CD4-positive, alpha-beta memory T cell (primary cell): ENCODE measurements at regions of chr10 and their contacts with region 1.

Region 1: DNA sequence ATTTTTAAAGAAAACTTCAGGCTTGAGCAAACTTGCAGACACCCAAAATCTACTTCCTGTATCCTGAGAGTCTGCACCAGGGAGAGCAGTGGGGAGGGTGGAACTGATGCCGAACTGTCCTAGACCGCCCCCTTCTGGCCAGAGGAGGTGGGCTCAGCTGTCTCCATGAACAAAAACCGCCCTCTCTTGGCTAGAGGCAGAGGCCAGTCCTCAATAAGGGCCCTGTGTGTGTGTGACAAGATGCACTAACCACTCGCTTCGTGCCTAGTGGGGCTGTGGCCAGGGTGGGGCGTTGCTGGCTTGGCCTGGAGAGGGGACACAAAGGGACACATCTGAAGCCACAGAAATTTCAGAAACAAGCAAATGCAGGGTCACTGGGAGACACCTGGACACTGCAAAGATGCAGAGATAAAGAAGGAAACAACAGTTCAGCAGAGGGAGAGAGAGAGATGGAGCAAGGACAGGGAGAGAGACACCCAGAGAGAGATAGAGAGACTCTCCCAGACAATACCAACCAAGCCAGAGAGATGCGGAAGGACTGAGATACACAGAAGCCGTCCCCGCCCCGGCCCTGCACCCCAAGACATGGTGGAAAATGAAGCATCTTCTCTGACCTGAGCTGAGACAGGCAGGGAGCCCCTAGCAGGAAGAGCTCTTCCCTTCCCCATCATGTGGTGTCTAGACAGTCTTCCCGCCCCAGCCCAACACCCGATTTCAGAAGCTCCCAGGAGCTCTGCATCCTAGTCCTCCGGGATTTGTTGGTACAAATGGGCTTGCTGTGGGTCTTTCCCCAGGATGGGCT is 22.7 kb upstream of the FXYD4 start:
- DNase-seq: peak; percentile 85 to 87 (median 86)
- H3K4me3 ChIP-seq: no peak overlapping the region
- H3K4me3 Mint-ChIP-seq: peak overlapping the region in 3 of 8 donors; percentile 27 to 50 (median 31)
- H3K27ac ChIP-seq: no peak overlapping the region
- H3K27ac Mint-ChIP-seq: peak overlapping the region in 6 of 7 donors; percentile 36 to 83 (median 57)
- H3K4me1 ChIP-seq: peaks cover 20% of the 10 kb centered on the region
- H3K4me1 Mint-ChIP-seq: peaks cover 16 to 30% (median 23%) of the 10 kb centered on the region in 4 donors
- H3K27me3 ChIP-seq: no peaks in the 10 kb centered on the region
- H3K27me3 Mint-ChIP-seq: peaks cover 6 to 7% of the 10 kb centered on the region in 2 donors

Region 2: GRCh38 chr10:42753126-42753506 is 595.6 kb before region 1 on chr10:
- CTCF ChIA-PET with region 1: no interaction called
- POLR2A ChIA-PET with region 1: no interaction called
- intact Hi-C with region 1: loop called (anchors 2 kb)
- DNase-seq: peak; percentile 50 to 65 (median 60)
- H3K4me3 ChIP-seq: peak overlapping the region; percentile 36 to 38
- H3K4me3 Mint-ChIP-seq: peak overlapping the region; percentile 81 to 92 (median 84)
- H3K27ac ChIP-seq: no peak overlapping the region
- H3K27ac Mint-ChIP-seq: no peak overlapping the region
- H3K4me1 ChIP-seq: peaks cover 13% of the 10 kb centered on the region
- H3K4me1 Mint-ChIP-seq: peaks cover 0 to 17% (median 4%) of the 10 kb centered on the region in 4 donors
- H3K27me3 ChIP-seq: peaks cover 12% of the 10 kb centered on the region
- H3K27me3 Mint-ChIP-seq: peaks cover 45 to 48% of the 10 kb centered on the region in 2 donors

Region 3: GRCh38 chr10:43255634-43256431 is 92.9 kb before region 1 on chr10:
- CTCF ChIA-PET with region 1: interaction called, 13 read pairs
- POLR2A ChIA-PET with region 1: no interaction called
- intact Hi-C with region 1: no loop called
- DNase-seq: peak; percentile 26 to 44 (median 34)
- H3K4me3 ChIP-seq: no peak overlapping the region
- H3K4me3 Mint-ChIP-seq: no peak overlapping the region
- H3K27ac ChIP-seq: no peak overlapping the region
- H3K27ac Mint-ChIP-seq: peak overlapping the region in 4 of 7 donors; percentile 33 to 75 (median 47)
- H3K4me1 ChIP-seq: peaks cover 12% of the 10 kb centered on the region
- H3K4me1 Mint-ChIP-seq: peaks cover 6 to 36% (median 15%) of the 10 kb centered on the region in 4 donors
- H3K27me3 ChIP-seq: no peaks in the 10 kb centered on the region
- H3K27me3 Mint-ChIP-seq: no peaks in the 10 kb centered on the region

Region 4: GRCh38 chr10:43287056-43288007 is 61.4 kb before region 1 on chr10:
- CTCF ChIA-PET with region 1: interaction called, 153 read pairs
- POLR2A ChIA-PET with region 1: interaction called, 33 read pairs
- intact Hi-C with region 1: no loop called
- DNase-seq: peak in 4 of 5 donors; percentile 52 to 84 (median 54)
- H3K4me3 ChIP-seq: peak overlapping the region; percentile 10 to 42
- H3K4me3 Mint-ChIP-seq: peak overlapping the region in 7 of 8 donors; percentile 54 to 86 (median 72)
- H3K27ac ChIP-seq: peak overlapping the region; percentile 32
- H3K27ac Mint-ChIP-seq: peak overlapping the region; percentile 73 to 92 (median 87)
- H3K4me1 ChIP-seq: peaks cover 42% of the 10 kb centered on the region
- H3K4me1 Mint-ChIP-seq: peaks cover 29 to 56% (median 42%) of the 10 kb centered on the region in 4 donors
- H3K27me3 ChIP-seq: no peaks in the 10 kb centered on the region
- H3K27me3 Mint-ChIP-seq: no peaks in the 10 kb centered on the region

Region 5: DNA sequence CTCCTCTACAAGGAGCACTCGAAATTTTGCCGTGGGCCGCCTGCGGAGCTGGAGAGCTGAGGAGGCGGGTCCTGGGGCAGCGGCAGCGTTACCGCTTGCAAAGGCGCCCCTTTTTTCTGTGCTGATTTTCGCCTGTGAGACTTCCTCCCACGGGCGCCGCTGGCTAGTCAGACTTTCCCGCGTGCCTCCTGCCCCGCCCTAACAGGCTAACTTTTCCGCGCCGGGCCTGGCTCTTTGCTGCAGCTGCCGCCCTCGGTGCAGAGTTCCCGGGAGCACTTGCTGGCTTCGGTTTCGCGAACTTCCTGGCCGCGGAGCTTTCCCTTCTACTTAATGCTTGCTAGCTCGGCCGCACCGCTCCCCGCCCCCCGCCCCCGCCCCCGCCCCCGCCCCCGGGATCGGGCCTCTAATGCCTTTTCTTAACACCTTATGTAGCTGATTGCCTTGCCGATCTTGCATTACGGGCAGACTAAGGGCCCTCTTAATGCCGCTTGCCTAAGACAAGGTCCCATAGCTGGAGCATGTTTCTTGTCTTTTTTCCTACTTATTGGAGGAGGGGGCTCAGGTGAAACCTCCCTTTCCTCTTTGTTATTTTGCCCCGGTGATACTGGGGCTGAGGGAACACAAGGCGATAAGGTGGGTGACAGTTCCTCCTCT is 43.9 kb before region 1 on chr10:
- CTCF ChIA-PET with region 1: interaction called, 14 read pairs
- POLR2A ChIA-PET with region 1: interaction called, 3 read pairs
- intact Hi-C with region 1: no loop called
- DNase-seq: peak in 4 of 5 donors; percentile 41 to 68 (median 44)
- H3K4me3 ChIP-seq: peak overlapping the region in 1 of 2 donors; percentile 44
- H3K4me3 Mint-ChIP-seq: peak overlapping the region; percentile 74 to 87 (median 84)
- H3K27ac ChIP-seq: peak overlapping the region; percentile 8
- H3K27ac Mint-ChIP-seq: peak overlapping the region; percentile 55 to 91 (median 88)
- H3K4me1 ChIP-seq: peaks cover 47% of the 10 kb centered on the region
- H3K4me1 Mint-ChIP-seq: peaks cover 48 to 73% (median 60%) of the 10 kb centered on the region in 4 donors
- H3K27me3 ChIP-seq: no peaks in the 10 kb centered on the region
- H3K27me3 Mint-ChIP-seq: no peaks in the 10 kb centered on the region

Region 6: GRCh38 chr10:43361986-43362839 is 13.5 kb after region 1 on chr10:
- CTCF ChIA-PET with region 1: interaction called, 7 read pairs
- POLR2A ChIA-PET with region 1: interaction called, 6 read pairs
- intact Hi-C with region 1: loop called (anchors 1 kb)
- DNase-seq: peak; percentile 96 to 98 (median 98)
- H3K4me3 ChIP-seq: peak overlapping the region; percentile 82 to 97
- H3K4me3 Mint-ChIP-seq: peak overlapping the region; percentile 95 to 100 (median 98)
- H3K27ac ChIP-seq: peak overlapping the region; percentile 92
- H3K27ac Mint-ChIP-seq: peak overlapping the region; percentile 97 to 99 (median 98)
- H3K4me1 ChIP-seq: peaks cover 19% of the 10 kb centered on the region
- H3K4me1 Mint-ChIP-seq: peaks cover 21 to 34% (median 27%) of the 10 kb centered on the region in 4 donors
- H3K27me3 ChIP-seq: no peaks in the 10 kb centered on the region
- H3K27me3 Mint-ChIP-seq: no peaks in the 10 kb centered on the region